Mammary epithelial cell (primary cell): ENCODE measurements at regions of chr2 and their contacts with region 1.

Region 1: GRCh38 chr2:182132605-182133004 is 147.0 kb downstream of the PPP1R1C start:
- DNase-seq: no peak
- H3K4me3 ChIP-seq: no peak overlapping the region
- H3K27ac ChIP-seq: no peak overlapping the region
- H3K4me1 ChIP-seq: peaks cover 7% of the 10 kb centered on the region
- H3K27me3 ChIP-seq: peaks cover 2% of the 10 kb centered on the region
- CTCF ChIP-seq: peak; percentile 13 to 36

Region 2: GRCh38 chr2:181563101-181563692 is 569.4 kb before region 1 on chr2:
- CTCF ChIA-PET with region 1: no interaction called
- dilution Hi-C with region 1: loop called (anchors 10 kb)
- in situ Hi-C with region 1: no loop called
- intact Hi-C with region 1: no loop called
- DNase-seq: no peak
- H3K4me3 ChIP-seq: no peak overlapping the region
- H3K27ac ChIP-seq: no peak overlapping the region
- H3K4me1 ChIP-seq: no peaks in the 10 kb centered on the region
- H3K27me3 ChIP-seq: no peaks in the 10 kb centered on the region
- CTCF ChIP-seq: no peak

Region 3: DNA sequence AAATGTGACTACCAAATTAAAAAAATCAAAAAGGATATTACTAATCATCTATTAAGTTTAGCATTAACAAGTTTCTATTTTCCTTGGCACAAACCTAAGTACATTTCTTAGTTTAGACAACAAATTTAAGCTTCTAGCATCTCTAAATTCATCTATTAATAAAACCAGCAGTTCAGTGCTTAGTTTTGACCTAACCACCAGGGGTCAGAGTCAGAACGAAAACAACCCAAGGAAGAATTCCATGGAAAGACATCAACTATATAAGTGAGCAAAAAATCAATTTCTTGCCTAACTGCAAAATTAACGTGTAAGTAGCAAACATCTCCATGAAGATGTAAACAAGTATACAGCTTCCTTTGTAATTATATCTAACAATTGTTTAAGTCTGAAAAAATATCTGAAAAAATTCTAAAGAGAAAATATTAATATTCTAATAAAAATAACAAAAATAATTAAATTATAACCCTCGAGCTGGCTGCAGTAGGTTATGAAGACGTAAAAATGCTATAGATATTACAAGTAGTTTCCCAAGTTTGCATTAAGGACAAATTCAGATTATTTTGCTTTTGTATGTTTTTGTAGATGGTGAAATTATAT is 559.4 kb before region 1 on chr2:
- CTCF ChIA-PET with region 1: no interaction called
- dilution Hi-C with region 1: loop called (anchors 10 kb)
- in situ Hi-C with region 1: no loop called
- intact Hi-C with region 1: loop called (anchors 2 kb)
- DNase-seq: peak; percentile 12
- H3K4me3 ChIP-seq: no peak overlapping the region
- H3K27ac ChIP-seq: no peak overlapping the region
- H3K4me1 ChIP-seq: peaks cover 4% of the 10 kb centered on the region
- H3K27me3 ChIP-seq: no peaks in the 10 kb centered on the region
- CTCF ChIP-seq: peak; percentile 39 to 65